ENCODE measurements at regions of chr19 and their contacts with region 1.

Region 1: GRCh38 chr19:48720613-48721296 is 1.2 kb upstream of the MAMSTR start:
- DNase-seq: peak; percentile 96
- H3K4me3 Mint-ChIP-seq: peak overlapping the region; percentile 88
- H3K27ac Mint-ChIP-seq: peak overlapping the region; percentile 98
- H3K4me1 Mint-ChIP-seq: peaks cover 30% of the 10 kb centered on the region
- H3K27me3 Mint-ChIP-seq: no peaks in the 10 kb centered on the region

Region 2: GRCh38 chr19:48664450-48664849 is 56.3 kb before region 1 on chr19:
- CTCF ChIA-PET with region 1: no interaction called
- POLR2A ChIA-PET with region 1: interaction called, 13 read pairs
- DNase-seq: no peak
- H3K4me3 Mint-ChIP-seq: no peak overlapping the region
- H3K27ac Mint-ChIP-seq: no peak overlapping the region
- H3K4me1 Mint-ChIP-seq: peaks cover 14% of the 10 kb centered on the region
- H3K27me3 Mint-ChIP-seq: no peaks in the 10 kb centered on the region

Region 3: GRCh38 chr19:48746738-48747575 is 26.2 kb after region 1 on chr19 and contains the start of gene IZUMO1:
- CTCF ChIA-PET with region 1: no interaction called
- POLR2A ChIA-PET with region 1: no interaction called
- DNase-seq: peak; percentile 65
- H3K4me3 Mint-ChIP-seq: peak within 1 kb of the TSS; percentile 34
- H3K27ac Mint-ChIP-seq: no peak within 1 kb of the TSS
- H3K4me1 Mint-ChIP-seq: peaks cover 19% of the 10 kb centered on the region
- H3K27me3 Mint-ChIP-seq: peaks cover 15% of the 10 kb centered on the region
- total RNA-seq, gene IZUMO1: 0.10 TPM in 1 of 2 experiments, not detected in the other

Measured in activated CD4-positive, alpha-beta T cell treated with anti-CD3 and anti-CD28 coated beads, Interleukin-2, amount 10 ng/mL, durations not matched to agents 7 days and 5 days (primary cell).